ENCODE measurements at regions of chr13 and their contacts with region 1.

Region 1: DNA sequence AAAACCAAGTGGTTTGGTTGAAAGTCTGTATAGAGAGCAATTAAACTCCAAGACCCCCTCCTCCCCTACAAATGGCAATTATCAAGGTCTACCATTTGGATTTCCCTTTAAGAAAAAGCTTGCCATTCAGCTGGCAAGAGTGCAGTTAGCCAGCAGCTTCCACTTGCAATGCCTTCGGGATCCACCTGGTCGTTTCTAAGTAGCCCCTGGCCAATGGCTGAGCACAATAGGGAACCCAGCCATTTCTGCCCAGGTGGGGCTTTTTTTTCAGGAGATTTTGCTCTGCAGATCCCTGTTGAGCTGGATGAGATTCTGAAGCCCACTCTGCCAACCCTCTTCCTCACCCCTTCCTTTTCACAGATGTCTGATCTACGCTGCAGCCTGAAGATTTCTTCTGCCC is 26.3 kb downstream of the TGDS start:
- DNase-seq: no peak
- H3K4me3 ChIP-seq: no peak overlapping the region
- H3K27ac ChIP-seq: no peak overlapping the region
- H3K4me1 ChIP-seq: no peaks in the 10 kb centered on the region
- H3K27me3 ChIP-seq: no peaks in the 10 kb centered on the region
- CTCF ChIP-seq: no peak
- POLR2A ChIP-seq: no peak

Region 2: DNA sequence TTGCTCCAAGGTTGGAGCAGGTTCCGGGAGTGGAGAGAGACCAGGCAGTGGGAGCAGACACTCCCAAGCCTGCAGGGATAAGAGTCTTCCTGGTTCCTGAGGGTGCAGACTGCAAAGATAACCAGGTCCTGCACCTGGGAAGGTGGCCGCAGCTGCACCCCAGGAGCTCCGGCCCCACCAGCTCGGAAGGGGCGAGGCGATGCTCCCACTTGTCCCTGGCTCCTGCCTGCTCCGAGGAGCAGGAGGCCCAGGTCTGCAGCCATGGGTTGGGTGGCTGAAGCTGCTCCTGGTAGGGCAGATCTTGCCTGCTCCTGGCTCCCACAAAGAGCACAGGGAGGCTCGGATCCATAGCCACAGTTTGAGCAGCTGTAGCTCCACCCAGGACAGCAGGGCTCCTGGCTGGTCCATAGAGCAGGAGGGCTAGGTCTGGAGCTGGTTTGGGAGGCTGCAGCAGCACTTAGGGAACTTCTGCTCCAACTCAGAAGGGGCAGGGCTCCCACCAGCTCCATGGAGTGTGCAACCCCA is 1594.6 kb before region 1 on chr13:
- intact Hi-C with region 1: loop called (anchors 10 kb)
- DNase-seq: no peak
- H3K4me3 ChIP-seq: no peak overlapping the region
- H3K27ac ChIP-seq: no peak overlapping the region
- H3K4me1 ChIP-seq: no peaks in the 10 kb centered on the region
- H3K27me3 ChIP-seq: no peaks in the 10 kb centered on the region
- CTCF ChIP-seq: no peak
- POLR2A ChIP-seq: no peak

Region 3: DNA sequence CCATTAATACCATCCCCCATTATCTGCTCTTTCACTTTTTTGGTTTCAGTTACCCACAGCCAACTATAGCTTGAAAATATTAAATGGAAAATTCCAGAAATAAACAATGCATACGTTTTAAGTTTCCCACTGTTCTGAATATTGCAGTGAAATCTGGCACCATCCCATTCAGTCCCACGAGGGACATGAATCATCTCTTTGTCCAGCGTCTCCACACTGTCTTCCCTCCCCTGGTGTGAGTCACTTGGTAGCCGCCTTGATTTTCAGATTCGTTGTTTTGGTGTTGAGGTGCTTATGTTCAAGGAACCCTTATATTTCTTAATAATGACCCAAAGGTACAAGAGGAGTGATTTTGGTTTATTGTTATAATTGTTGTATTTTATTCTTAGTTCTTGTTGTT is 336.2 kb before region 1 on chr13:
- intact Hi-C with region 1: no loop called
- DNase-seq: no peak
- H3K4me3 ChIP-seq: no peak overlapping the region
- H3K27ac ChIP-seq: no peak overlapping the region
- H3K4me1 ChIP-seq: no peaks in the 10 kb centered on the region
- H3K27me3 ChIP-seq: no peaks in the 10 kb centered on the region
- CTCF ChIP-seq: no peak
- POLR2A ChIP-seq: no peak

Region 4: GRCh38 chr13:94813920-94814500 is 244.4 kb after region 1 on chr13:
- intact Hi-C with region 1: no loop called
- DNase-seq: no peak
- H3K4me3 ChIP-seq: no peak overlapping the region
- H3K27ac ChIP-seq: no peak overlapping the region
- H3K4me1 ChIP-seq: no peaks in the 10 kb centered on the region
- H3K27me3 ChIP-seq: no peaks in the 10 kb centered on the region
- CTCF ChIP-seq: no peak
- POLR2A ChIP-seq: no peak